CD4-positive, alpha-beta T cell (primary cell): ENCODE measurements at regions of chr4 and their contacts with region 1.

Region 1: DNA sequence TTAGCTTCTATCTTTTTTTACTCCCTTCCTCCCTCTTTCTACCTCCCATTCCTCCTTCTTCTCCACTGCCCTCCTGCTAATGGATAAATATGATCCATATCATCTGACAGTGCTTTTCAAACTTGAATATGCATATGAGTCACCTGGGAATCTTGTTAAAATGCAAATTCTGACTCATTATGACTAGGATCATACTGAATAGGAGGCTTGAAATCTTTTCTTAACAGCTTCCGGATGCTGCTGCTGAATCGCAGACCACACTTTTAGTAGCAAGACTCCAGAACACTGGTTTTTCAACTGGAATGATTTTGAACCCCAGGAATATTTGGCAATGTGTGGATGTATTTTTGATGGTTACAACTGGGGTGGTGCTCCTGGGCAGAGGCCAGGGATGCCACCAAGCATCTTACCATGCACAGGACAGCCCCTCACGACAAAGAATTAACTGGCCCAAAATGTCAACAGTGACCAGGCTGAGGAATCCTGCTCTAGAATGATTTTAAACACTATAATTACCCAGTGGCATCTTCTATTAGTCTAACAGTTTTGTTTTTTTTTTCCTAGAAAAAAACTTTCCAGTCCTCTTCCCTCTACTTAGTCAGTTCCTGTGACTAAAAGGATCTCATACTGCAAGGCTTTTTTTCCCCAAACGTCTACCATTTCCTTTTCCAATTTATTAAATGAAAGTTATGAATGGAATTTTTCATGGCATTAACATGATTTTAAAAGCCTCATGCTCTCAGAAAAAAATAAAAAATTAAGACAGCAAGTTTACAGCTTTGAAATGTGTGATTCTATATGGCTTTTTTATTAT is 10.6 kb upstream of the PYURF start:
- DNase-seq: no peak
- ATAC-seq: no peak
- H3K4me3 ChIP-seq: no peak overlapping the region
- H3K4me3 Mint-ChIP-seq: no peak overlapping the region
- H3K27ac ChIP-seq: no peak overlapping the region
- H3K27ac Mint-ChIP-seq: no peak overlapping the region
- H3K4me1 ChIP-seq: peaks cover 2% of the 10 kb centered on the region
- H3K4me1 Mint-ChIP-seq: peaks cover under 1% of the 10 kb centered on the region
- H3K27me3 ChIP-seq: no peaks in the 10 kb centered on the region
- H3K27me3 Mint-ChIP-seq: no peaks in the 10 kb centered on the region
- CTCF ChIP-seq: no peak

Region 2: DNA sequence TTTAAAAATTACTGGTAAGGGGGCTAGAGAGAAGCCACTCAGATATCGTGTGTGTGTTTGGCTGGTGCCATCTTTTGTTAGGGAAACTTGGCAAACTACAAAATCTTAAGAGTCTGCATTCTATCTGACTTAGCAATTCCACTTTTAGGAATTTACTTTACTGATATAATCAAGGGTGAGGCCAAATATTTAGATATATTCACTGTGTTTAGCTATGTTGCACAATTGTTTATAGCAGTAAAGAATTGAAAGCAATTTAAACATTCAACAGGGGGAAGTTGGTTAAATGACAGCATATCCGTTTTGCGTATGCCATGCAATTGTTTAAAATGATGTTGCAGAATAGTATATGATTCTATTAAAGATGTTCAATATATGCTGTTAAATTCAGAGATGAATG is 51.8 kb after region 1 on chr4:
- CTCF ChIA-PET with region 1: no interaction called
- POLR2A ChIA-PET with region 1: no interaction called
- intact Hi-C with region 1: loop called (anchors 5 kb)
- DNase-seq: no peak
- ATAC-seq: no peak
- H3K4me3 ChIP-seq: no peak overlapping the region
- H3K4me3 Mint-ChIP-seq: no peak overlapping the region
- H3K27ac ChIP-seq: no peak overlapping the region
- H3K27ac Mint-ChIP-seq: no peak overlapping the region
- H3K4me1 ChIP-seq: peaks cover under 1% of the 10 kb centered on the region
- H3K4me1 Mint-ChIP-seq: peaks cover 8% of the 10 kb centered on the region
- H3K27me3 ChIP-seq: no peaks in the 10 kb centered on the region
- H3K27me3 Mint-ChIP-seq: no peaks in the 10 kb centered on the region
- CTCF ChIP-seq: no peak

Region 3: GRCh38 chr4:88600176-88600838 is 66.2 kb after region 1 on chr4:
- CTCF ChIA-PET with region 1: interaction called, 10 read pairs
- POLR2A ChIA-PET with region 1: no interaction called
- intact Hi-C with region 1: no loop called
- DNase-seq: peak in 1 of 14 experiments; percentile 53
- ATAC-seq: peak; percentile 42
- H3K4me3 ChIP-seq: no peak overlapping the region
- H3K4me3 Mint-ChIP-seq: peak overlapping the region; percentile 79
- H3K27ac ChIP-seq: no peak overlapping the region
- H3K27ac Mint-ChIP-seq: peak overlapping the region; percentile 77
- H3K4me1 ChIP-seq: peaks cover 18% of the 10 kb centered on the region
- H3K4me1 Mint-ChIP-seq: peaks cover 80% of the 10 kb centered on the region
- H3K27me3 ChIP-seq: no peaks in the 10 kb centered on the region
- H3K27me3 Mint-ChIP-seq: no peaks in the 10 kb centered on the region
- CTCF ChIP-seq: no peak

Region 4: DNA sequence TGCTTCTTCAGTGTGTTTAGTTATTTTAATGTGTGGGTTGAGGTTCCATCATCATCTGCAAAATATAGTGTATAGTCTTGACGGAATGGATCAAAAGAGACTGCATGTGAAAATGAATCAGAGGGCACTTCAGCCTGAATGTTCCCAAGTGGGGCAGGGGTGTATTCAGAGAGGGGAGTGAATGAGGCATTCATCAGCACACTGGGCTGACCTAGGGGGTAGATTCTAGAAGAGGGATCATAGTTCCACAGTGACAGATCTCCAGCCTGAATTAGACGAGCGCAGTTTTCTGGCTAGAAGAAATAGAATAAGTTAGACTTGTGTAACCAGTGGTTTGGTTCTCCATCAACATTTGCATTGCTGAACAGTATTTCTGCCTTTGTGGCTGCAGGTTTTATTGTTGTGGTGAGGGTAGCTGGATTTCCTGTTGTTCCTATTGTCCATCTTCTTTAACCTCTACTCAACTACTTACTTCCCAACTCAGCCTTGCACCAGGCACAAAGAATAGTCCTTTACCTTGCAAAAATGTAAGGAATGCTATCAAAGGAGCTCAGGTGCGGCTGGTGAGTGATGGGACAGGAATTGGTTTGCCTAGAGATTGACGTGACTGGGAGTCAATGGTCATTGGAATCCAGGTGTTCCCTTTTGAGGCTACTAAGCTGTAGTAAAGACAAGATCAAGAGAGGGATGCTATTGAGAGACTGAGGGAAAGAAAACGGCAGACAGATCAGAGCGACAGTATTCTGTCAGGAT is 112.6 kb after region 1 on chr4:
- CTCF ChIA-PET with region 1: interaction called, 11 read pairs
- POLR2A ChIA-PET with region 1: no interaction called
- intact Hi-C with region 1: no loop called
- DNase-seq: no peak
- ATAC-seq: no peak
- H3K4me3 ChIP-seq: no peak overlapping the region
- H3K4me3 Mint-ChIP-seq: no peak overlapping the region
- H3K27ac ChIP-seq: no peak overlapping the region
- H3K27ac Mint-ChIP-seq: peak overlapping the region; percentile 56
- H3K4me1 ChIP-seq: peaks cover 6% of the 10 kb centered on the region
- H3K4me1 Mint-ChIP-seq: peaks cover 80% of the 10 kb centered on the region
- H3K27me3 ChIP-seq: no peaks in the 10 kb centered on the region
- H3K27me3 Mint-ChIP-seq: no peaks in the 10 kb centered on the region
- CTCF ChIP-seq: no peak

Region 5: DNA sequence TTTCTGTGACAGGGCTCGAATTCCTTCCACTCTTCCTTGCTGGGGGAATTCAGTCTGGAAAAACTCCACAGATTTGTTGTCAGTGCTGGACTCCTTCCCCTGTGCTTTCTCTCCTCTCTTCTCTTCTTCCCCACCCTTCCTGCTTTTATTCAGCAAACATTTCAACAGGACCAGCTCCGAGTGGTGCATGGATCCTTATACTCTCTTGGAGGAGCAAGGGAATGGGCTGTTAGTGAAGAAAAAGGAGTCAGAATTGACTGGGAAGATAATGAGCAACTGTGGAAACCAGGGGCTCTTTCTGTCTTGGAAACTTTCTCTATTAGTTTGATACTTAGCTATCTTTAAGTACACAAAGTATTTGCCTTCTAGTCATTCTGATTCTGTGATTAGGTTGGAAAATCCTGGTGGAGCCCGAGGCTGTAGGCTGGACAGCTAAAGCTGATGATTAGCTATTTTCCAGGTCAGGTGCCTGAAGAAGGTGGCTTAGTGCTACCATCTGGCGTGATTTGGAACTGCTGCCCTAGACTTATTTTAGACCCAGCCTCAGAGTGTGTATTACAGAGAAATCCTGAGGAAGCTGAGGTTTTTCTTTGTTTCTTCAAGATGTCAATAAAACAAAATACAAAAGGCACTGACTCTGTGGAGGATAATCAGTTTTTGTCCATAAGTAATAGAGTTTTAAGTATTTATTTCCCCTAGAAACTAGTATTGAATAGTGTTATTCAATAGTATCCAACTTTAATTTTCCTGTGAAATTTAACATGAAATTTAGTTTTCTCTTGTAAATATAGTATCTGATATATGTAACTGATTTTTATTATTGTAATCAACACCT is 125.1 kb after region 1 on chr4:
- CTCF ChIA-PET with region 1: interaction called, 48 read pairs
- POLR2A ChIA-PET with region 1: no interaction called
- intact Hi-C with region 1: loop called (anchors 1 kb)
- DNase-seq: peak in 12 of 14 experiments; percentile 11 to 68 (median 28)
- ATAC-seq: peak; percentile 88
- H3K4me3 ChIP-seq: no peak overlapping the region
- H3K4me3 Mint-ChIP-seq: no peak overlapping the region
- H3K27ac ChIP-seq: no peak overlapping the region
- H3K27ac Mint-ChIP-seq: peak overlapping the region; percentile 34
- H3K4me1 ChIP-seq: no peaks in the 10 kb centered on the region
- H3K4me1 Mint-ChIP-seq: peaks cover 33% of the 10 kb centered on the region
- H3K27me3 ChIP-seq: no peaks in the 10 kb centered on the region
- H3K27me3 Mint-ChIP-seq: no peaks in the 10 kb centered on the region
- CTCF ChIP-seq: peak; percentile 68